Activated CD4-positive, alpha-beta T cell treated with anti-CD3 and anti-CD28 coated beads for 36 hours (primary cell): ENCODE measurements at regions of chr6 and their contacts with region 1.

Region 1: GRCh38 chr6:134097114-134097707 is 44.8 kb upstream of the SLC2A12 start:
- DNase-seq: peak; percentile 79
- ATAC-seq: no peak
- H3K4me3 Mint-ChIP-seq: no peak overlapping the region
- H3K27ac Mint-ChIP-seq: no peak overlapping the region
- H3K4me1 Mint-ChIP-seq: no peaks in the 10 kb centered on the region
- H3K27me3 Mint-ChIP-seq: peaks cover 13% of the 10 kb centered on the region

Region 2: DNA sequence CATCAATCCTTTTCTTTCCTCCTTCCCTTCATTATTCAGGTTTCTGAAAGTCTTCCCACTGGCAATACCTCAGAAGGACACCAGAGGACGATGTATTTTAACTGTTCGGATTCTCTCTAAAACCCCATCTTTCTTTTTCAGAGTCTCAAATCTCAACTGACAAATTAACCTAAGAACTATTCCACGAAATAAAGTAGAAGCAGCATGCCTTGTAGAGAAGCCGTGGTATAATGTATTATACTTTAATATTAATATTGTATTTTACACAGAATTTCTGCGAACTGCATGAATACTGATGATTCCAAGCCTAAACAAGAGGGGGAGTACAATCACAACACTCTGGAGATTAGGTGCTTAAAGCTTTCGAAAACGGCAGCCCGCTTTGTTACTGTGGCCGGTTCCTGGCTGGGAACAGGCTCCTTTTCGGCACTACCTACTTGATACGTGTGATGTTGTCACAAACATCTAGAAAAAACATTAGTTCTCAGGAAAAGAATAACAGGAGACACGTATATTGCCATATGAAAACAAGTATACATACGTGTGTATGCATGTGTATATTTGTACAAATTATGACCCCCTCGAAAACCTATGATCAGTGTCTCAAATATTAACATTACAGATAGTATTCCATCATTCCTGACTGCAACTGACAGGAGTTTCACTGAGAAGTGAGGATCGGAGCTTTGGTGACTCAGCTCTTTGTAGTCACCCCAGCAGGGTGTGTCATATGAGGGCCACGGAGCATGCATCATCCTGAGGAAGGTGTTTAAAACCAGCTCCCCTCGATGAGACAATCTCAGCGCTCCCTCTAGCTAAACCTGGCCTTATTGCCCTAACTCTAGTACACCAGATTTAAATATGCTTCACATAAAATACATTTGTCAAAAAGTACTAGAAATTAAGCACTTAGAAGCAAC is 528.0 kb before region 1 on chr6:
- CTCF ChIA-PET with region 1: interaction called, 10 read pairs
- POLR2A ChIA-PET with region 1: no interaction called
- intact Hi-C with region 1: loop called (anchors 1 to 2 kb)
- DNase-seq: peak; percentile 61
- ATAC-seq: peak; percentile 99
- H3K4me3 Mint-ChIP-seq: peak overlapping the region; percentile 40
- H3K27ac Mint-ChIP-seq: no peak overlapping the region
- H3K4me1 Mint-ChIP-seq: peaks cover 7% of the 10 kb centered on the region
- H3K27me3 Mint-ChIP-seq: peaks cover 28% of the 10 kb centered on the region

Region 3: DNA sequence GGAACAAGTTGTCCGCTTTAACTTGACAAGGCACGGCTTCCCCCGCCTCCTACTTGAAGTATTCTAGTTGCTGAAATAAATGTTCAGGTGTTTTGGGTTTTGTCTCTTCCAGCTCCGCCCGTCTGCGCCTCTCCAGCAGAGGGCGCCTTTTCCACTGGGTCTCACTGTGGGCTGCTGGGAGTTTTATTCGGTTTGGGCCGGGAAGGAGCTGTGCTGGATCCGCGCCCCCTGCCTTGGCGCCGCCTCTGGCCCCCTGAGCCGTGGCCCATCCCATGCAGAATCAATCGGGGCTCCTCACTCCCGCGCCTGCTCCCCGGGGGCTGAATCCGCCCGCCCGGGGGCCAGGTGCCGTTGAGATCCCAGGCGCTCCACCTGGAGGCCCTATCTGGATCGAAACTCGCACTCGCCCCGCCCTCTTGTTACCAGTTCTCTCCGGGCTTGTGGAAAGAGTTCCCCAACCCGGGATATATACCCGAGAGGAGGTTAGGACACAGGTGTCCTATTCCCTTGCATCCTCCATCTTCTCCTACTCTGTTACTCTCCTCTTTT is 259.3 kb before region 1 on chr6:
- CTCF ChIA-PET with region 1: interaction called, 13 read pairs
- POLR2A ChIA-PET with region 1: no interaction called
- intact Hi-C with region 1: loop called in 1 of 2 experiments (anchors 1 kb)
- DNase-seq: peak; percentile 81
- ATAC-seq: peak; percentile 74
- H3K4me3 Mint-ChIP-seq: peak overlapping the region; percentile 32
- H3K27ac Mint-ChIP-seq: no peak overlapping the region
- H3K4me1 Mint-ChIP-seq: peaks cover 5% of the 10 kb centered on the region
- H3K27me3 Mint-ChIP-seq: peaks cover 18% of the 10 kb centered on the region

Region 4: DNA sequence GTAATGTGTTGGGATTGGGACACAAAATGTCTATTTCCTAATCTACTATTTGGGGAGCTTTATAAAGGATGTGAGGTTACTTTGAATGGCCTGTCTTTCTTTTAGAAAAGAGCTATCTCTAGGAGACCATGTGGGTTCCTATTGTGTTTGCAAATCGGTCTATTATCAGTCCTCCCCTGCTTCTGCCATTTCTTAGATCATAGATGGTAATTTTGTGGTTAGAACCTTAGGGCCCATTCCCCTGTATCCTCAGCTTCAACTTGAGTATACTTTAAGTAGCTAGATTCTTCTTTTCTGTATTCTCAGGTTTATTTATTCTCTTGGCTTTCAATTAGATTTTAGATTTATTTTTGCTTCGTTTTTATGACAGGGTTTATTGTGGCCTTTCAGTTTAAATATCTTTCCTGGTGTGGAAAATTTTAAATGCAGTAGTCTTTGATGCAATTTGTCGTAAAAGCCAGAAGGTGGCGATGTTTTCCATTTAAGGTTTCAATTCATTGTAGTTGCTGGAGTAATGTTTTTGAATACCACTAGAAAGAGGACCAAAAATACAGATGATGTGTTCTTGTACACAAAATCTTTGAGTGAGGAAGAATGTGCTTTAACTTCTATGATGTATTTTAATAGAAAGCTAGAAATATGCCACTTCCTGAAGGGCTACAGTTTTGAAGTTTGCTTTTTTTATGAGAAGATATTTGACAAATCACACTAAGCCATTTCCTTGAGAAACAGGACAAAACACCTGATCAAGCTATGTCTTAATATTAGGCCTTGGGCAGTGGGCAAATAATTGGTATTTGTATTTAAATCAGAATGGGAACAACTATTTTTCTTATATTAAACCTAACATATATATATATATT is 123.9 kb before region 1 on chr6:
- CTCF ChIA-PET with region 1: interaction called, 48 read pairs
- POLR2A ChIA-PET with region 1: no interaction called
- intact Hi-C with region 1: loop called (anchors 1 kb)
- DNase-seq: no peak
- ATAC-seq: peak; percentile 61
- H3K4me3 Mint-ChIP-seq: no peak overlapping the region
- H3K27ac Mint-ChIP-seq: no peak overlapping the region
- H3K4me1 Mint-ChIP-seq: peaks cover 31% of the 10 kb centered on the region
- H3K27me3 Mint-ChIP-seq: no peaks in the 10 kb centered on the region

Region 5: DNA sequence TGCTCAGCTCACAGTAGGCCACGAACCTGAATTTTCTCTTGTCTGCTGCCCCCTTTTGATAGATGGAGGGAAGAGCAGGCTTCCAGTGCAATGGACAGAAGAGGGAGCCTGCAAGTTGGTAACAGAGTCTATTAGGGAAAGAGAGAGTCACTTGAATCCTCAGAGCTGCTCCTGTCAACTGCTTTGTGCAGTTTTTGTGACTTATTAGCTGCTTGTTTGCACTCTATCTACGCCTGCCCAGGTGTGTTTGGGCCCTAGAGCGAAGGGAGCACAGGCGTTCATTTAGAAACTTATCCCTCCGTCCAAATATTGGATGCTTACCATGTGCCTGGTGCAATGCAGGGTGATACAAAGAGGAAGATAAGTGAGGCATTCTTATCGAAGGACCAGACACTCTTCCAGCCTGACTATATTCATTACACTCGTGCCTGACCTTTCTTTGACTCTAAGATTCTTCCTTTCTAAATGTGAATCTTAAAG is 33.2 kb before region 1 on chr6:
- CTCF ChIA-PET with region 1: interaction called, 23 read pairs
- POLR2A ChIA-PET with region 1: no interaction called
- intact Hi-C with region 1: loop called in 1 of 2 experiments (anchors 2 kb)
- DNase-seq: peak; percentile 70
- ATAC-seq: peak; percentile 92
- H3K4me3 Mint-ChIP-seq: no peak overlapping the region
- H3K27ac Mint-ChIP-seq: no peak overlapping the region
- H3K4me1 Mint-ChIP-seq: no peaks in the 10 kb centered on the region
- H3K27me3 Mint-ChIP-seq: peaks cover 1% of the 10 kb centered on the region

Region 6: GRCh38 chr6:134080171-134080795 is 16.9 kb before region 1 on chr6:
- CTCF ChIA-PET with region 1: interaction called, 27 read pairs
- POLR2A ChIA-PET with region 1: no interaction called
- intact Hi-C with region 1: no loop called
- DNase-seq: no peak
- ATAC-seq: no peak
- H3K4me3 Mint-ChIP-seq: no peak overlapping the region
- H3K27ac Mint-ChIP-seq: no peak overlapping the region
- H3K4me1 Mint-ChIP-seq: peaks cover 10% of the 10 kb centered on the region
- H3K27me3 Mint-ChIP-seq: no peaks in the 10 kb centered on the region

Region 7: DNA sequence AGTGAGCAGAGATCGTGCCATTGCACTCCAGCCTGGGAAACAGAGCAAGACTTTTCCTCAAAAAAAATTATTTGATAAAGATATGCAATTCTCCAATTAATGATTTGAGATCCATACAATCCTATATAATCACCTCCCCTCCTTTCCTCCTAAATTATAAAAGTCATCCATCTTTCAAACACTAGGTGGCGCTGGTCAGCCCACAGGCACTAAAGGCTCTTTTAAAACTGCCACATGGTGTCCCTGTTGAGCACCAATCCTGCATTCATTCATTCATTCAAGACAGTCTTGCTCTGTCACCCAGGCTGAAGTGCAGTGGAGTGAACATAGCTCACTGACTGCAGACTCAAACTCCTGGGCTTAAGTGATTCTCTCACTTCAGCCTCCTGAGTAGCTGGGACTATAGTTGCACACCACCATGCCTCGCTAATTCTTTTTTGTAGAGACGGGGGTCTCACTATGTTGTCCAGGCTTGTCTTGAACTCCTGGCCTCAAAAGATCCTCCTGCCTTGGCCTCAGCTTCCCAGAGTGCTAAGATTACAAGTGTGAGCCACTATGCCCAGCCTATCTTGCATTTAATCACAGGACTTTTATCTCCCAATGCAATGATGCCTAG is 14.0 kb after region 1 on chr6:
- CTCF ChIA-PET with region 1: interaction called, 30 read pairs
- POLR2A ChIA-PET with region 1: no interaction called
- intact Hi-C with region 1: no loop called
- DNase-seq: peak; percentile 64
- ATAC-seq: peak; percentile 88
- H3K4me3 Mint-ChIP-seq: no peak overlapping the region
- H3K27ac Mint-ChIP-seq: no peak overlapping the region
- H3K4me1 Mint-ChIP-seq: peaks cover 3% of the 10 kb centered on the region
- H3K27me3 Mint-ChIP-seq: peaks cover 7% of the 10 kb centered on the region

Region 8: DNA sequence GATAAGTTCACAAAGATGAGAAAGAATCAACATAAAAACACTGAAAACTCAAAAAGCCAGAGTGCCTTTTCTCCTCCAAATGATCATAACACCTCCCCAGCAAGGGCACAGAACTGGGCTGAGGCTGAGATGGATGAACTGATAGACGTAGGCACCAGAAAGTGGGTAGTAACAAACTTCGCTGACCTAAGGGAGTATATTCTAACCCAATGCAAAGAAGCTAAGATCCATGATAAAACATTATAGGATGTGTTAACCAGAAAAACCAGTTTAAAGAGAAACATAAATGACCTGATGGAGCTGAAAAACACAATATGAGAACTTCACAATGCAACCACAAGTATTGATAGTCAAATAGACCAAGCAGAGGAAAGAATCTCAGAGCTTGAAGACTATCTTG is 693.0 kb after region 1 on chr6:
- CTCF ChIA-PET with region 1: no interaction called
- POLR2A ChIA-PET with region 1: no interaction called
- intact Hi-C with region 1: no loop called
- DNase-seq: no peak
- ATAC-seq: no peak
- H3K4me3 Mint-ChIP-seq: no peak overlapping the region
- H3K27ac Mint-ChIP-seq: no peak overlapping the region
- H3K4me1 Mint-ChIP-seq: no peaks in the 10 kb centered on the region
- H3K27me3 Mint-ChIP-seq: peaks cover 5% of the 10 kb centered on the region